Ascending aorta (tissue), 2 donors: ENCODE measurements at regions of chr2 and their contacts with region 1.

Region 1: DNA sequence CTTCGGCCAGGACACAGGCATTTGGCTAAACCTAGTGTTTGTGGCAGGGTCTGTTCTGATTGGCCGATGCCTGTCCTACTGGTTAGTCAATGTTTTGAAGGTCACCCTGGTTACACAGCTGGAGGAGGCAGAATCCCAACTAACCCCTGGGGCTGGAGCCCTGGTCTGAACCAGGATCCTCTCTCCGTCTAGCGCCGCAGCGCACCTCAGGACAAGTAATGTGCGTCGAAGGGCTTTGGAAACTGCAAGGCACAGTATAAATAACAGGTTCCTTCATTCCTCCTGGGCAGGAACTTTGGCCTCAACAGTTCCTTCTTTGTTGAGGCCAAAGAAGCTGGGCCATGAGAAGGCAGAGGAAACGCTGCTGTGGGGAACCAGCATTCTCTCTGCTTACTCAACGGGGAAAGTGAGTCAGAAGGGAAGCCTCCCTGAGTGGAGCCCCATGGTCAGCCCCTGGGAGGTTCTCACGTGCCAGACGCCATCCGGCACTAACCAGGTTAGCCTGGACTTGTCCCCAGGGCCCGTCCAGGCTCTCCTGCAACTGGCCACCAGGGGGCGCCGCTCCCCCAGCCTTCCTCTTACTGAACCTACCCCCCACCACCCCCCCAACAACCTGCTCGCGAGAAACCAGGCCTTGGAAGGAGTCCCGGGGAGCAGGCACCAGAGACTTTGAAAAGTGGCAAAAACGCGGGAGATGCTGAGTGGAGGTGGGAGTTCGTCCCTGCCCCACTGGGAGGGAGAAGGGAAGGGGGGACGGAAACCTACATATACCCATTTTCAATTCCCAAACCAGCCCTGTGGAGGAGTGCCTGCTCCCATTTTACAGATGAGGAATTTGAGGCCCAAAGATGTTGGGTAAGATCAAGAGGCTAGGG is 19.8 kb downstream of the TEX44 start:
- DNase-seq: peak; percentile 93 to 99
- H3K4me3 ChIP-seq: peak overlapping the region in 1 of 2 donors; percentile 61
- H3K27ac ChIP-seq: peak overlapping the region; percentile 96 to 100
- H3K4me1 ChIP-seq: peaks cover 21 to 43% of the 10 kb centered on the region in 2 donors
- H3K27me3 ChIP-seq: no peaks in the 10 kb centered on the region
- CTCF ChIP-seq: peak; percentile 93 to 98 (median 97)

Region 2: DNA sequence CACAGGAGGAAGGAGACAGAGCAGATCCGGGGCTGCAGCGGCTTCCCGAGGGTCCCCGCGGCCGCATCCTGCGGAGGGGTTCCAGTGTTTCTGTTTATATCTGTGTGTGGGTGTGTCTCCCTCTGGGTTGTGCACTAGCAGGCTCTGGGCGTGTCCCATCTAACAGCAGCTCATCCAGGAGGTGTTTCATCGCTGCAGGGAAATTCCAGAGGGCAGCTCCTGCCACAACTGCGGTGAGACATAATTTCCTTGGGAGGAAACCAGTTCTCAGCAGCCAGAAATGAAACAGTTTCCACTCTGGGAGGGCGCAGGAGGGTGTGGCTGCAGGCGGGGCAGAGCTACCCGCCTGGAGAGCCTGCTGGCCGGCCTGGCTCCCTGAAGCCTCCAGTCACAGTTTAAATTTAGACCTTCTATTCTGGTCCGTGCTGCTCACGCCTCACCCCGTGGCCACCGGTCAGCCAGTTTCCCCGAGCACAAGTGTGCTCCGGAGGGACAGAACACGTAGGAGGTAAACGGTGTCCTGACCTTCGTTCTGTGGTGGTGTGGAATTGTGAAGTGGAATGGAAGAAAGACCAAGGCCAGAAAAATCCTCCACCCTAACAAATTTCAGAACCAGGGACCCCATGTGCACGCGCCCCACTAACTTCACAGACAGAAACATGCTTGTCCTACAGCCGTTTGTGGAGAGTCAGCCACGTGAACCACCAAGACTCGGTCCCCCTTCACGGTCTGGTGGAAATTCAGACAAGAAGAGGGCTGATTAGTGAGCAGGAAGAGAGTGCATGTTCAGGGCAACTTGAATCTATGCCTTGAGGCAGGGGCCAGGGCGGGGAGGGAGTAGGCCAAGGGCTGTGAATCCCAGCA is 30.4 kb after region 1 on chr2:
- intact Hi-C with region 1: loop called (anchors 1 kb)
- DNase-seq: peak; percentile 86 to 98
- H3K4me3 ChIP-seq: peak overlapping the region; percentile 35 to 49
- H3K27ac ChIP-seq: peak overlapping the region; percentile 97 to 99
- H3K4me1 ChIP-seq: peaks cover 21 to 41% of the 10 kb centered on the region in 2 donors
- H3K27me3 ChIP-seq: no peaks in the 10 kb centered on the region
- CTCF ChIP-seq: no peak

Region 3: DNA sequence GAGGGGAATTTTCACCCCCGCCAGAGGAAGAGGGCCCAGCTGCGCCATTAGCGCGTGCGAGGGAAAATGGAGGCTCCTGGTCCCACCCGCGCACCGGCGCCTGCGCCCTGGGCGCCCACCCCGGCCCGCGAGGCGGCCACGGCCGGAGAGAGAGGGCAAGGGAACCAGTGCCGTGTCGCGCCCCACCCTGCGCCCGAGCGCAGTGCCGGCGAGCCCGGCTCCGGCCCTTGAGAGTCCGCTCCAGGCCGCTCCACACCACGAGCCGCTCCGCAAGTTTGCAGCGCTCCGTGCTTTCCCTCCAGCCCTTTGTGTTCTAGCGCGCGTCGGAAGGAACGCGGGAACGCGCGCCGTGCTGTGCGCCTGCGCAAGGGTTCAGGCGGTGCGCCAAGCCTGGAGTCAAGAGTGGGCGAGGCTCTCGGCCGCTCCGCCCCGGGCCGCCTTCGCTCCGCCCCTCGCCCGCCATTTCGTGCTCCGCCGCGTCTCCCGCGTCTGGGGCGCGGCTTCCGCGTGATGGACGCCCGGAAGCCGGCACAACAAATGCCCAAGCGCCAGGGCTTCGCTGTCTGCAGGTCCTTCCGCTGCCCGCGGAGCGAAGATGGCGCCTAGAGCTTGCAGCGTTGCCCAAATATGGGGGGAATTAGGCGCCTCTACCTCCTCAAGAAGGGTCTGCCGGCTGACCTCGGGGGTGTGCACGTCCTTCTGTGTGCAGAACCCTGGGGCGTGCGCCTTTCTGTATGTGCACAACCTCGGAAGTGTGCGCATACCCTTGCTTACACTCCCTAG is 49.8 kb after region 1 on chr2:
- intact Hi-C with region 1: loop called (anchors 1 kb)
- DNase-seq: peak; percentile 76 to 96
- H3K4me3 ChIP-seq: peak overlapping the region; percentile 53 to 63
- H3K27ac ChIP-seq: peak overlapping the region; percentile 99 to 100
- H3K4me1 ChIP-seq: peaks cover 3 to 18% of the 10 kb centered on the region in 2 donors
- H3K27me3 ChIP-seq: no peaks in the 10 kb centered on the region
- CTCF ChIP-seq: peak in 1 of 3 experiments; percentile 10

Region 4: DNA sequence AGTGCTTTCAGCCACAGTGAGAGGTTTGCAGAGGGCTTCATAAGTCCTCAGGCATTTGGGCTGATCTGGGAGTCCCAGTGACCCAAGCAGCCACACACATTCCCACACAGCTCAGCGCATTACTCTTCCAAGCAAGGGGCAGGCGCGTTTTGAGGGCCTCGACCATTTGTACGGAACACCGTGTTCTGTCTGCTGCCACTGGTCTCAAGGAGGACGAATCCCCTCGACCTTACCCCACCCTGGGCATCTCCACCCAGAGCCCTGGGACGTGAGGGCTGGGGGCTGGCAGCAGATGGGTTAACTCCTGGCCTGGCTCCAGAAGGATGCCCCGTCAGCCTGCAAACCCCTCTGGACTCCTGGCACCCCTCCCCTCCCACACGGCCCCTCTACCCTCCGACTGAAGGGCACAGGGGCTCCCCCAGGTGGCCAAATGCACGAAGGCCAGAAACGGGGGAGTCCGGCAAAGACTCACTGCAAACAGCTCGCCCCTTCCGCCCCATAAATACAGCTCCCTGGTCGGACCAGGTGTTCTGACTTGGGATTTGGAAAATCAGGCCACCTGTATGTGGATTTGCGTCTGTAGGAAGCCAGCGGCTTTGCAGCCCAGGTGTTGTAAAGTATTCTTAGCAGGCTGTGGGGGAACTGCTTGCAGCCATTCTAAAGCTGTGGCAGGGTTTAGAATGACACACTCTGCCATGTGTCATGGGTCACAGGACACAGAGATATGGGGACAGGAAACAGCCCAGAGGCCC is 62.3 kb after region 1 on chr2:
- intact Hi-C with region 1: loop called (anchors 1 kb)
- DNase-seq: peak in 1 of 2 donors; percentile 88
- H3K4me3 ChIP-seq: no peak overlapping the region
- H3K27ac ChIP-seq: peak overlapping the region; percentile 93 to 95
- H3K4me1 ChIP-seq: peaks cover 7 to 20% of the 10 kb centered on the region in 2 donors
- H3K27me3 ChIP-seq: no peaks in the 10 kb centered on the region
- CTCF ChIP-seq: peak; percentile 84 to 95 (median 90)

Region 5: GRCh38 chr2:231685349-231686191 is 73.2 kb after region 1 on chr2:
- intact Hi-C with region 1: no loop called
- DNase-seq: no peak
- H3K4me3 ChIP-seq: no peak overlapping the region
- H3K27ac ChIP-seq: no peak overlapping the region
- H3K4me1 ChIP-seq: peaks cover 0 to 7% of the 10 kb centered on the region in 2 donors
- H3K27me3 ChIP-seq: no peaks in the 10 kb centered on the region
- CTCF ChIP-seq: no peak

Region 6: GRCh38 chr2:231706731-231707624 is 94.6 kb after region 1 on chr2:
- intact Hi-C with region 1: loop called (anchors 1 kb)
- DNase-seq: peak; percentile 90 to 99
- H3K4me3 ChIP-seq: peak overlapping the region; percentile 52 to 73
- H3K27ac ChIP-seq: peak overlapping the region; percentile 100
- H3K4me1 ChIP-seq: peaks cover 17 to 19% of the 10 kb centered on the region in 2 donors
- H3K27me3 ChIP-seq: no peaks in the 10 kb centered on the region
- CTCF ChIP-seq: peak; percentile 67 to 86 (median 75)

Region 7: GRCh38 chr2:231713730-231714430 is 101.5 kb after region 1 on chr2:
- intact Hi-C with region 1: loop called (anchors 1 kb)
- DNase-seq: peak; percentile 58 to 95
- H3K4me3 ChIP-seq: no peak overlapping the region
- H3K27ac ChIP-seq: peak overlapping the region; percentile 30 to 83
- H3K4me1 ChIP-seq: peaks cover 23 to 35% of the 10 kb centered on the region in 2 donors
- H3K27me3 ChIP-seq: no peaks in the 10 kb centered on the region
- CTCF ChIP-seq: peak; percentile 88 to 92 (median 90)

Region 8: DNA sequence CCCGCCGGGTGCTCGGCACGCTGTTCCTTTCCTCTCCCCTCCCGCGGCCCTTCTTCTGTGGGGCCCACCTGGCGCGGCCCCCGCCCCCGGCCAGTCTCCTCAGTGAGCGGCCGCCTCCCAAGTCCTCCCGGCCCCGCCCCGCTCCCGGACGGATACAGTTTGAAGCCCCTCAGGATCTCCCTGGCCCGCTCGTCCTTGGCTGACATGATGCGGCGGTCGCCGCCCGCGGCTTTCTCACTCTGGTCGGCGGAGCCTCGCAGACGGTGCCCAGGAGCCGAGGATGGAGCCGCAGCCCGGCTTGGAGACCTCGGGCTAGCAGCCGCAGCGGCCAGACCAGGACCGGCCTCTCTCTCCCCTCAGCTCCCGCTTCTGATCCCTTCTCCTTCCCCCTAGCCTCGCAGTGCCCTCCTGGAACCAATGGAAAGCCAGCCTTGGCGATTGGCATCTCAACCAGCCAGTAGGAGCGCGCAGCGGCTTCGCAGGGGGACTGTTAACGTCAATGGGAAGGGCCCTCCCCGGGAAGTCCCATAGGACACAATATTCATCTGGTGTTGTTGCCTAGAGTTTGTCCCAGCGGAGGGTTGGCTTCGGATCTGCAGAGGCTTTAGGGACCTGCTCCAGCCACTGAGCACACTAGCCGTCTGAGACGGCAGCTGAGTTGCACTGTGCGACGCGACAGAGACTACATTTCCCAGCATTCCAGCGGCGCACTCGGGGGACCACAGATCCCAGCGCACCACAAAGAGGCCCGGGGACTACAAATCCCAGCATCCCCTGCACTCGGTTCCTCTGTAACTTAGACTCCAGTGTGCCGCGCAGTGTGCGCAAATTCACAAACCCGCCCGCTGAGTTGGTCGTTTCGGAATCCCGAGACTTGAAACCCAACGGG is 168.7 kb after region 1 on chr2 and contains the start of gene PDE6D:
- intact Hi-C with region 1: loop called (anchors 5 kb)
- DNase-seq: peak; percentile 96 to 99
- H3K4me3 ChIP-seq: peak within 1 kb of the TSS; percentile 68 to 94
- H3K27ac ChIP-seq: peak within 1 kb of the TSS; percentile 83 to 85
- H3K4me1 ChIP-seq: peaks cover 4 to 29% of the 10 kb centered on the region in 2 donors
- H3K27me3 ChIP-seq: no peaks in the 10 kb centered on the region
- CTCF ChIP-seq: no peak
- total RNA-seq, gene PDE6D: 34.1 TPM